Activated T-helper 1 cell treated with anti-CD3 and anti-CD28 coated beads, Interleukin-12 subunit alpha, Interleukin-12 subunit beta, Interleukin-2, Interleukin-4 antibody, amounts not matched to agents 30 ng/mL and 10 ng/mL and 1 ng/mL, durations not matched to agents 14 hours and 24 hours and 36 hours (primary cell): ENCODE measurements at regions of chr19 and their contacts with region 1.

Region 1: DNA sequence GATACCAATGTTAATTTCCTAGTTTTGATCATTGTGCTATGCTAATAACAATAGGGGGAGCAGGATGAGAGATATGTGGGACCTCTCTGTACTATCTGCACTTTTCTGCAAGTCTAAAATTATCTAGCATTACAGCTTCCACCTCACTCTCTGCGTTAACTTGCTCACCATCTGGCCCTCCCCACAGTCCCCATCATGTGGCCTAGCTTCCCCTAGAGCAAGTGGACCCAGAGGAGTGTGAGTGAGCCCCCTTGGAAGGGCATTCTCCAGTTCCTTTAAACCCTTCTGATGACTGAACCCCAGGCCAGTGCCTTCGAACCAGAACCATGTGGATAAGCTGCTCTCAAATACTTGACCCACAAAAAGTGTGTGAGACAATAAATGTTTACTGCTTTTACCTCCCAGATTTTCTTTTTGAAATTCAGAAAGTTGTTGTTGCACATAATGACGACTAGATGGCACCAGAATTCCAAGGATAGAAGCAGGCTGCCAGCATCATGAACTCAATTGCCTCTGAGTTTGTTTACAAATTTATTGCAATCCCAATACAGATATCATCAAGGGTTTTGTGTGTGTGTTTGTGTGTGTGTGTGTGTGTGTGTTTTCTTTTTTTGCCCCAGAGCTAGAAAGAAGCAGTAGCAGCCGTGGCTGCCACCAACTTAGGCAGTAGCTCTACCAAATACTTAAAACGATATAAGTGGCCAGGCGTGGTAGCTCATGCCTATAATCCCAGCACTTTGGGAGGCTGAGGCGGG is 49.0 kb upstream of the ZNF780A start:
- DNase-seq: no peak
- H3K4me3 Mint-ChIP-seq: no peak overlapping the region
- H3K27ac Mint-ChIP-seq: no peak overlapping the region
- H3K4me1 Mint-ChIP-seq: peaks cover 16% of the 10 kb centered on the region
- H3K27me3 Mint-ChIP-seq: peaks cover 2% of the 10 kb centered on the region

Region 2: DNA sequence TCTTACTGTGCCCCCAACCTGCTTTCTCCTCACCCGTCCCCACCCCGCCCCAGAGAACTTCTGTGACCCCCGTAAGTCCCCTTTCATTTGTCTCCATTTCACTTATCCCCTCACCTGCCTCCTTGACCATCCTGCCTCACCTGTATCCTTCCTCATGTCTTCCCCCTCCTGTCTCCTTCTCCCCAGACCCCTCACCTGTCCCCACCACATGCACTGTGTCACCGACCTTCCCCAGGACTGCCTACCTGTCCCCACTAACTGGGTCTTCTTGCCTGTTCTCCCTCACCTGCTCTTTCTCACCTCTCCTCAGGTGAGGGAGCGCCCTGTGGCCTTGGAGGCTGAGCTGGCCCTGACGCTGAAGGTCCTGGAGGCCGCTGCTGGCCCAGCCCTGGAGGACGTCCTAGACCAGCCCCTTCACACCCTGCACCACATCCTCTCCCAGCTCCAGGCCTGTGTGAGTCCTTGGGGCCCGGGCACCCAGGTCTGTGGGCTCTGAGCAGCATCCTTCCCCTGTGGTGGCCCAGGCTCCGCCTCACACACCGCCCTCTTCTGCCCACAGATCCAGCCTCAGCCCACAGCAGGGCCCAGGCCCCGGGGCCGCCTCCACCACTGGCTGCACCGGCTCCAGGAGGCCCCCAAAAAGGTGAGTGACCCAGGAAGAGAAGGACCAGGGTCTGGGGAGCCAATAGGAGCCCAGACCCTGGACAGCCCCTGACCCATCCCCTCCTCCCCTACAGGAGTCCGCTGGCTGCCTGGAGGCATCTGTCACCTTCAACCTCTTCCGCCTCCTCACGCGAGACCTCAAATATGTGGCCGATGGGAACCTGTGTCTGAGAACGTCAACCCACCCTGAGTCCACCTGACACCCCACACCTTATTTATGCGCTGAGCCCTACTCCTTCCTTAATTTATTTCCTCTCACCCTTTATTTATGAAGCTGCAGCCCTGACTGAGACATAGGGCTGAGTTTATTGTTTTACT is 841.8 kb before region 1 on chr19:
- intact Hi-C with region 1: no loop called
- DNase-seq: peak; percentile 58
- H3K4me3 Mint-ChIP-seq: no peak overlapping the region
- H3K27ac Mint-ChIP-seq: no peak overlapping the region
- H3K4me1 Mint-ChIP-seq: peaks cover 32% of the 10 kb centered on the region
- H3K27me3 Mint-ChIP-seq: peaks cover 5% of the 10 kb centered on the region

Region 3: DNA sequence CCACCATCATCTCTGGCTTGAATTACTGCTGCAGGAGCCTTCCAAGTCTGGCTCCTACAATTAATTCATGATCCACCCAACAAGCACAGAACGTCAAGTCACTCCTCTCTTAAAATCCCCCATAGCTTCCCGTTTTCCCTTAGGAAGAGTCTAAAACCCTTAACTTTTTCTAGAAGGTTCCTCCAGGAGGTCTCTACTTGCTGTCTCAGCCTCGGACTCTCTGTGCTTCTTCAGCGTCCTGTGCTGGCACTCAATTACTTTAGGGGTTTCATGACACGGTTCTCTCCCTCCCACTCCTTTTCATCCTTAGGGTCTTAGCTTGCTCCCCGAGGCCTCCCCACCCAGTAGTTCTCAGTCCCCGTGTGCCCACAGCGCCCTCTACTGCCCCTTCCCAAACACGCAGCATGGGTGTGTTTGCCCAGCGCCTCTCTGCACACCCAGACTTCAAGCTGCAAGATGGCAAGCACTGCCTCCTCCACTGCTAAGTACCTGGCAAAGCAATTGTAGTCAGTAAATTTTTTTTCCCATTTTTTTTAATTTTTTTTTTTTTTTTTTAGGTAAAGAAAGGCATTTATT is 25.7 kb after region 1 on chr19:
- intact Hi-C with region 1: loop called (anchors 1 kb)
- DNase-seq: peak; percentile 38
- H3K4me3 Mint-ChIP-seq: no peak overlapping the region
- H3K27ac Mint-ChIP-seq: peak overlapping the region; percentile 15
- H3K4me1 Mint-ChIP-seq: no peaks in the 10 kb centered on the region
- H3K27me3 Mint-ChIP-seq: peaks cover 2% of the 10 kb centered on the region

Region 4: DNA sequence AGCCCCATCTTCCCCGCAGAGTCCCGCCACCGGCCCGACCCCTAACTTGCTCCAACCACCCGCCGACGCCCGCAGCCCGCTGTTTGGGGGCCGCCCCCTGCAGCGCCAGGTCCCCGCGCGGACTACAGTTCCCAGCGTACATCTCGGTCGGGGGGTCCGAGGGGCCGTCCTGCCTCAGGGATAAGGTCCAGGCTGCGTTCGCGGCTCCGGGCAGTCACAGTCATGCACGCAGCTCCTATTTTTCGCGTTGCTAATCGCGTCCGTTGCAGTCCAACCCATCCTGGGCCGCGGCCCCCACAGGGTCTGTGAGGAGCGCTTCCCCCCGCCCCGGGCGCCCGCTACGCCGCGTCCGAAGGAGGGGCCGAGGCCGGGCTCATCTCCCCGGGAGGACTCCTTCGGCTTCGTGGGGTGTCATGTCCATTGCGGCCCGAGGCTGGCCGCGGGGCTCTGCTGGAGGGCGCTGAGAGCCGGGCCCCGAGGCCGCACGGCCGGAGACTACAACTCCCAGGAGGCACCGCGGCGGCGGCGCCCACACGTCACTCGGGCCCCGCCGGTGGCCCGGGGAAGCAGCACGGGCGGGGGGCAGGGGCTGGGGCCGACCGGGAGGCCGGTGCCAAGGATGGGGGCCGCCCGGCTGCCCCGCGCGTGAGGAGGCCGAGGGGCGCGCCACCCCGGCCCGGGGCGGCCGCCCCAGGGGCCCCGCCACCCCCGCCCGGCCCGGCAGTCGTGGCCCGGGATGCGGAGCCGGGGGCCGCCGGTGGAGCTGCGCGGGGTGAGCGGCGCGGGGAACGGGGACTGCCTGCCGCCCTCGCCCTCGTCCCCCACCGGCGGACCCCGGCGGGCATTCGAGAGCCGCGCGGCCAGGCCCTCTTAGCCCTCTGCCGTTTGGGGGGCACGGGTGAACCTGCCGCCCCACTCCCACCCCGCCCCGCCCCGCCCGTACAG is 51.5 kb after region 1 on chr19 and contains the start of gene MAP3K10:
- intact Hi-C with region 1: loop called (anchors 1 kb)
- DNase-seq: peak; percentile 73
- H3K4me3 Mint-ChIP-seq: peak within 1 kb of the TSS; percentile 90
- H3K27ac Mint-ChIP-seq: peak within 1 kb of the TSS; percentile 93
- H3K4me1 Mint-ChIP-seq: peaks cover 34% of the 10 kb centered on the region
- H3K27me3 Mint-ChIP-seq: peaks cover 8% of the 10 kb centered on the region
- total RNA-seq, gene MAP3K10: 13.8 and 19.8 TPM in 2 replicates